ENCODE measurements at regions of chr15 and their contacts with region 1.

Region 1: GRCh38 chr15:52115598-52116427 is 3.2 kb upstream of the BCL2L10 start:
- DNase-seq: peak; percentile 88
- ATAC-seq: peak; percentile 81
- H3K4me3 ChIP-seq: peak overlapping the region in 2 of 3 experiments; percentile 50 to 55; a peak in 3 of 6 replicates
- H3K27ac ChIP-seq: peak overlapping the region; percentile 96
- H3K4me1 ChIP-seq: peaks cover 60% of the 10 kb centered on the region
- H3K27me3 ChIP-seq: no peaks in the 10 kb centered on the region
- CTCF ChIP-seq: no peak
- EP300 ChIP-seq: peak in 1 of 2 experiments; percentile 87; a peak in 2 of 4 replicates
- POLR2A ChIP-seq: no peak
- RAD21 ChIP-seq: no peak

Region 2: DNA sequence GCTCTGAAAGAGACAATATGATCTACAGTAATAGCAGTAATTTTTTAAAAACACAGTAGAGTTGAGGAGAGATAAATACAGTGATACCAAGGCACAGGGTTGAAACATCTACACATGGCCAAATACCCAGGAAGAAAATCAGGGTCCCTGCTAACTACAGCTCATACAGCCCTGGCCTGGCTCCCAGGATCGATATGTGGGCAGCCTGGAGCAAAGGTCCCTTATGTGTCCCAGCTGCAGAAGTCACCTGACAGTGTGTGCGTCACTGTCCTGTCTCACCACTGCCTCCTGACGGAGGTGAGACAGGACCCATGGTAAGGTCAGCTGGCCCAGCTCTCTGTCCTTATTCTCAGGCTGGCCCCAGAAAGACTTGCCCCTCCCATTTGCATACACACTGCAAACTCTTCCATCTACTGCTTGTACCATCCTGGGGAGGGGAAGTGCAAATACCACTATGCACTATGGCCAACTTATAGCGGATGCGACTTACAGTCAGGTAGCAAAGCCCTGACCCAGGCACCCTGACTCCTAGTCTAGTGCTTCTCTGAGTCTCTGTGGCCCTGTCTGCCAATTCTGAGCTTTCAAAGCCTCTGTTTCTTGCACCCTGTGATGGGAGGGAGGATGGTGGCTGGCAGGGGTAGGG is 18.8 kb after region 1 on chr15:
- CTCF ChIA-PET with region 1: no interaction called
- POLR2A ChIA-PET with region 1: interaction called, 9 read pairs
- in situ Hi-C with region 1: no loop called
- intact Hi-C with region 1: loop called (anchors 1 kb)
- DNase-seq: peak; percentile 93
- ATAC-seq: peak; percentile 94
- H3K4me3 ChIP-seq: peak overlapping the region in 1 of 3 experiments; percentile 2; a peak in 1 of 6 replicates
- H3K27ac ChIP-seq: peak overlapping the region; percentile 67
- H3K4me1 ChIP-seq: peaks cover 66% of the 10 kb centered on the region
- H3K27me3 ChIP-seq: no peaks in the 10 kb centered on the region
- CTCF ChIP-seq: peak; percentile 93
- EP300 ChIP-seq: peak; percentile 73 to 77
- POLR2A ChIP-seq: peak; percentile 53 to 65; a peak in 2 of 4 replicates
- RAD21 ChIP-seq: peak; percentile 74; the same call in 1 of the 2 replicates

Measured in HepG2 (cell line).